HAP-1 (cell line): ENCODE measurements at regions of chr20 and their contacts with region 1.

Region 1: DNA sequence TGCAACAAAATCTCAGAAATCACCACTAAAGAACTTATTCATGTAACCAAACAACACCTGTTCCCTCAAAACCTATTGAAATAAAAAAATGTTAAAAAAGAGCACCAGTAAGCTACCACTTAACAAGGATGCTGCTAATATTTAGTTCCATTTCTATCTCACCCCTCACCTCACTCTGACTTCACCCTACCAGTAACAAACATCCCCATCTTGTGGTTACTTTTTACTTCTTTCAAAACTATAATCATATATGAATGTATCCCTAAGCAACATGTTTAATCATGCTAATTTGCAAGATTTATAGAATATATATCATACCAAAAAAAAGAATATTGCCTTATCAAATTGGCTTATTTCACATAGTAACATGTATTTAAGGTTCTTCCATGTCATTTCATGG is 27.4 kb upstream of the SLC24A3 start:
- DNase-seq: no peak
- H3K4me3 ChIP-seq: no peak overlapping the region
- H3K4me1 ChIP-seq: no peaks in the 10 kb centered on the region
- H3K27me3 ChIP-seq: no peaks in the 10 kb centered on the region

Region 2: DNA sequence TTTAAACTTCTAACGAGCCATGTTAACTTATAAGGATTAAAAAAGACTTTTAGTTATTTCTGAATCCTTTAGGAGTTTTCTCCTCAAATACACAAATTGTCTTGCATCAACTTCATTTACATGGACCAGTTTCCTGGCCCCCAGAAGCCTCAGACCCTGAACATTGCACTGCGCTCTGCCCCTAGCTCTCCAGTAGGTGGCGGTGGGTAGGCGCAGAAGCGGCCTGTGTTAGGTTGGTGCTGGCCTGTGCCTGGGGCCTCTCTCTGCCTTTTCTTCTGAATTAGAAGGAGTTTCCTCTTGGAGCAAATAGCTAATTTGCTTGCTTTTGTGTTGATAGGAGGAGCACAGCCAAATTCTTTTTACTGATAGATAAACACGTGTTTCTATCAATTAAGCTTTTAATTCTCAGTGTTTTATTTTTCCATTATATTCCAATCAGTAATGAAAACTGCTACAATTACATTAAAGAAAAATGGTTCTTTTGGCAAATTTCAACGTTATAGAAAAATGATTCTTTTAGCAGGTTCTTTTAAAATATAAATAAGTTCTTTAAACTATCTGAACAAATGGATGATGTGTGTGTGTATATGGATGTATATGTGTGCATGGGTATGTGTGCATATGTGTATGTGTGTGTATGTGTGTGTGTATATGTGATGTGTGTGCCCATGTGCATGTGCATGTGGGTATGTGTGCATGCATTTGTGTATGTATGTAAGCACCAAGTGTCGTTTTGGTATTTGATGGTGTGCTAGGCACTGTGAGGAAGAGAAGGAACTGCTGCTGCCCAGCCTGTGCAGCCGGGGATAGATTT is 552.7 kb before region 1 on chr20:
- in situ Hi-C with region 1: loop called (anchors 25 kb)
- DNase-seq: peak; percentile 61 to 83
- H3K4me3 ChIP-seq: no peak overlapping the region
- H3K4me1 ChIP-seq: no peaks in the 10 kb centered on the region
- H3K27me3 ChIP-seq: no peaks in the 10 kb centered on the region

Region 3: GRCh38 chr20:19361790-19362189 is 176.7 kb after region 1 on chr20:
- in situ Hi-C with region 1: no loop called
- DNase-seq: no peak
- H3K4me3 ChIP-seq: no peak overlapping the region
- H3K4me1 ChIP-seq: no peaks in the 10 kb centered on the region
- H3K27me3 ChIP-seq: no peaks in the 10 kb centered on the region